ENCODE measurements at regions of chr2 and their contacts with region 1.

Region 1: DNA sequence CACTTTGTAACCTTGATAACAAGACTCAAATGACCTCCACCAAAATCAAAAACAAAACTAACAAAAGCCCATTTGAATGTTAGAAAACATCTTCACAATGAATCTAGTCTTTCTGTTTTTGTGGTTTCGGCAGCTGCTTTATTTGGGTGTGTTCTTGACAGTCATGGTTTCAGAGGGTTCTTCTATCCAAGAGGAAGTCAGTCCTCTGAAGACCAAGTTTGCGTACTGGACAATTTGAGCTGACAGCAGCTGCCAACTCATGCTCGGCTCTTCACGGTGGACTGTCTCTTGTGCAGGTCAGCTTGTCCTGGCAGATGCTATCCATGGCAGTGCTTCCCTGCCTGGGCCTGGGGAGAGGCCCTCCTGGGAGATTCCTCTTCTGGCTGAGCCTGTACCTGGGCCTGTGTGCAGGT is 91.0 kb downstream of the TMEM17 start:
- DNase-seq: no peak
- ATAC-seq: no peak
- H3K4me3 ChIP-seq: no peak overlapping the region
- H3K4me3 Mint-ChIP-seq: no peak overlapping the region
- H3K27ac ChIP-seq: no peak overlapping the region
- H3K27ac Mint-ChIP-seq: no peak overlapping the region
- H3K4me1 ChIP-seq: peaks cover 6% of the 10 kb centered on the region
- H3K4me1 Mint-ChIP-seq: peaks cover 9% of the 10 kb centered on the region
- H3K27me3 ChIP-seq: no peaks in the 10 kb centered on the region
- H3K27me3 Mint-ChIP-seq: peaks cover 2% of the 10 kb centered on the region
- CTCF ChIP-seq: no peak

Region 2: DNA sequence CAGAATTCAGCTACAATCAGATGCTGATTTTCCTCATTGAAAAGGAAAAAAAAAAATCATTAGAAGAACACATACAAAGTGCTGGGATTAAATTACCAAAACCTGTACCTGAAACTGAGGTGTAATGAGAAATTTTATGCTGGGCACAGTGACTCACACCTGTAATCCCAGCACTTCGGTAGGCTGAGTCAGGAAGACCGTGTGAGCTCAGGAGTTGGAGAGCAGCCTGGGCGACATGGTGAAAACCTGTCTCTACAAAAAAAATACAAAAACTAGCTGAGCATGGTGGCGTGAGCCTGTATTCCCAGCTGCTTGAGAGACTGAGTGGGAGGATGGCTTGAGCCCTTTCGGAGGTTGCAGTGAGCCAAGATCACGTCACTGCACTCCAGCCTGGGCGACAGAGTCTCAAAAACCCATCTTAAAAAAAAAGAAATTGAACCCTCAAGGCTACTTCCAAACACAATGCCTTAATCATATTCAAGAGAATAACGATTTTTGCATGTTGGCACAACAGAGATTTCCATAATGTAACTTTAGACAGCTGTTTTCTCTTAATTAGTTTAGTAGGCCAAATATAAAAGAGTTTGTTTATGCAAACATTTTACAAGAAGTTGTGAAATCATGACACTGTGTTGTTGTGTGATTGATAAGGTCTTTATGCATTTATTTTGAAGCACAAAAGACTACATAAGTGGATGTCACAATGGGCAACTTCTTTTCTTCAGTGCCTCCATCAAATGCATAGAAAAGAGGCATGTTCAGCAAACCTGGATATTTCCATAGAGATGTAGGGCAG is 625.0 kb before region 1 on chr2:
- CTCF ChIA-PET with region 1: no interaction called
- POLR2A ChIA-PET with region 1: no interaction called
- intact Hi-C with region 1: loop called in 1 of 2 experiments (anchors 10 kb)
- DNase-seq: no peak
- ATAC-seq: no peak
- H3K4me3 ChIP-seq: no peak overlapping the region
- H3K4me3 Mint-ChIP-seq: no peak overlapping the region
- H3K27ac ChIP-seq: no peak overlapping the region
- H3K27ac Mint-ChIP-seq: no peak overlapping the region
- H3K4me1 ChIP-seq: no peaks in the 10 kb centered on the region
- H3K4me1 Mint-ChIP-seq: peaks cover 5% of the 10 kb centered on the region
- H3K27me3 ChIP-seq: no peaks in the 10 kb centered on the region
- H3K27me3 Mint-ChIP-seq: peaks cover 6% of the 10 kb centered on the region
- CTCF ChIP-seq: no peak

Region 3: GRCh38 chr2:61922714-61923113 is 492.3 kb before region 1 on chr2:
- CTCF ChIA-PET with region 1: interaction called, 21 read pairs
- POLR2A ChIA-PET with region 1: no interaction called
- intact Hi-C with region 1: loop called (anchors 1 kb)
- DNase-seq: no peak
- ATAC-seq: no peak
- H3K4me3 ChIP-seq: no peak overlapping the region
- H3K4me3 Mint-ChIP-seq: no peak overlapping the region
- H3K27ac ChIP-seq: no peak overlapping the region
- H3K27ac Mint-ChIP-seq: no peak overlapping the region
- H3K4me1 ChIP-seq: no peaks in the 10 kb centered on the region
- H3K4me1 Mint-ChIP-seq: no peaks in the 10 kb centered on the region
- H3K27me3 ChIP-seq: no peaks in the 10 kb centered on the region
- H3K27me3 Mint-ChIP-seq: no peaks in the 10 kb centered on the region
- CTCF ChIP-seq: no peak

Region 4: DNA sequence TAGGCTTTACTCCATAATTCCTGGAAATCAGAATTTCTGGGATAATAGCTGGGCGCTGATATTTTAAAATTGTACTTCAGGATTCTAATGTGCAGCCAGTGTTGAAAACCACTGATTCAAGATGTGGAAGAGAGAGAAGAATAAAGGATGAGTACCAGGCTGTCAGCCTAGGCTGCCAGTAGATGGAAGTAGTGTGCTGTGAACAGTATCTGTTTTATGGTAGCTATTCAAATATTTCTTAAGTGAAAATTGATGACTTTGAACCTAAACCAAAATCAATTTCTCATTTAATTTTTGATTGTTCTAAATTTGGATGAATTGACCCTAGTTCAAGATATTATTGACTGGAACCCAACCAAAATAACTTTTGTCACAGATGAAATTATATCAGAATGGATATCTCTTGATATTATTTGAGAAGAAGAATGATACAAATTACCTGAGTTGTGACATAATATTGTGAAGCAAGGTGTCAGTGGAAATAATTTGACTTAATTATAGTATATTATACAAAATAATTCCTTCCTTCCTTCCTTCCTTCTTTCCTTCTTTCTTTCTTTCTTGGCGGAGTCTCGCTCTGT is 421.5 kb before region 1 on chr2:
- CTCF ChIA-PET with region 1: interaction called, 45 read pairs
- POLR2A ChIA-PET with region 1: no interaction called
- intact Hi-C with region 1: loop called in 1 of 2 experiments (anchors 1 kb)
- DNase-seq: peak in 3 of 9 experiments; percentile 13 to 64 (median 48)
- ATAC-seq: no peak
- H3K4me3 ChIP-seq: no peak overlapping the region
- H3K4me3 Mint-ChIP-seq: no peak overlapping the region
- H3K27ac ChIP-seq: no peak overlapping the region
- H3K27ac Mint-ChIP-seq: no peak overlapping the region
- H3K4me1 ChIP-seq: no peaks in the 10 kb centered on the region
- H3K4me1 Mint-ChIP-seq: no peaks in the 10 kb centered on the region
- H3K27me3 ChIP-seq: no peaks in the 10 kb centered on the region
- H3K27me3 Mint-ChIP-seq: no peaks in the 10 kb centered on the region
- CTCF ChIP-seq: peak; percentile 63

Region 5: DNA sequence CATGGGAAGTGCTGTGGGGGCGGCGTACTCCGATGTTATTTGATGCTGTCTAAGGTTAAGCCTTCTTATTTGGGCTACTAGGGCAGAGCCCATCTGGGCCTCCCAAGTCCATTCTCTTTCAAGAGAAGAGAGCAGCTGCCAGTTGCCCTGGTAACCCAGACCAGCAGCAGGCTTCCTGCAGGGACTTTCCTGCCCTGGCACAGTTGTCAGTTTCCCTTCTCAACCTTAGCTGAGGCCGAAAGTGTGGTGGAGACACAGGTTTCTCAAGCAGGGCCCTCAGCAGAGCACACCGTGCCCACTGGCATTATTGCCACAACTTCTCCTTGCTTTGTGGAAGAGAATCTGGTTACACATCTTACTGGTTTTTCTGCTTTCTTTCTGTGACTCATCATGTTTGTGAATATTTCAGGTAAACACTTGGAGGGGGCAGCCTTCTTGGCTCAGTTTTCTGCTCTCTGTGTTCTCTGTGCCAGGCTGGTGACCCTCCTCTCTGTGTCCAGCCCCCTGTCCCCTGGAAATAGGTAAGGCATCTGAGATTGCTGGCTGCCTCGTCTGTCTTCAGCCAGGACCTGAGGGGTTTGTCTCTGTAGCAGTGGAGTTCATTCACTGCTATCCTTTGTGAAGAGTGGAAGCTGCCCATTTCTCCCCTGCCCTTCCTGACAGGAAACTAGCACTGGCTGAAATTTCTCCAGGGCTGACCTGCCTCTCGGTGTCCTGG is 108.1 kb before region 1 on chr2:
- CTCF ChIA-PET with region 1: interaction called, 3 read pairs
- POLR2A ChIA-PET with region 1: no interaction called
- intact Hi-C with region 1: loop called in 1 of 2 experiments (anchors 5 kb)
- DNase-seq: peak in 6 of 9 experiments; percentile 17 to 85 (median 38)
- ATAC-seq: peak; percentile 14
- H3K4me3 ChIP-seq: no peak overlapping the region
- H3K4me3 Mint-ChIP-seq: peak overlapping the region; percentile 13
- H3K27ac ChIP-seq: peak overlapping the region in 1 of 2 experiments; percentile 73
- H3K27ac Mint-ChIP-seq: peak overlapping the region; percentile 82
- H3K4me1 ChIP-seq: peaks cover 89% of the 10 kb centered on the region
- H3K4me1 Mint-ChIP-seq: peaks cover 93% of the 10 kb centered on the region
- H3K27me3 ChIP-seq: no peaks in the 10 kb centered on the region
- H3K27me3 Mint-ChIP-seq: no peaks in the 10 kb centered on the region
- CTCF ChIP-seq: no peak

Region 6: GRCh38 chr2:62402156-62402555 is 12.9 kb before region 1 on chr2:
- CTCF ChIA-PET with region 1: interaction called, 16 read pairs
- POLR2A ChIA-PET with region 1: no interaction called
- intact Hi-C with region 1: no loop called
- DNase-seq: no peak
- ATAC-seq: no peak
- H3K4me3 ChIP-seq: no peak overlapping the region
- H3K4me3 Mint-ChIP-seq: no peak overlapping the region
- H3K27ac ChIP-seq: no peak overlapping the region
- H3K27ac Mint-ChIP-seq: no peak overlapping the region
- H3K4me1 ChIP-seq: no peaks in the 10 kb centered on the region
- H3K4me1 Mint-ChIP-seq: peaks cover 2% of the 10 kb centered on the region
- H3K27me3 ChIP-seq: peaks cover 0 to 2% of the 10 kb centered on the region in 2 experiments
- H3K27me3 Mint-ChIP-seq: no peaks in the 10 kb centered on the region
- CTCF ChIP-seq: no peak

Region 7: GRCh38 chr2:62604336-62604735 is 189.3 kb after region 1 on chr2:
- CTCF ChIA-PET with region 1: no interaction called
- POLR2A ChIA-PET with region 1: no interaction called
- intact Hi-C with region 1: no loop called
- DNase-seq: no peak
- ATAC-seq: no peak
- H3K4me3 ChIP-seq: no peak overlapping the region
- H3K4me3 Mint-ChIP-seq: no peak overlapping the region
- H3K27ac ChIP-seq: no peak overlapping the region
- H3K27ac Mint-ChIP-seq: no peak overlapping the region
- H3K4me1 ChIP-seq: no peaks in the 10 kb centered on the region
- H3K4me1 Mint-ChIP-seq: no peaks in the 10 kb centered on the region
- H3K27me3 ChIP-seq: no peaks in the 10 kb centered on the region
- H3K27me3 Mint-ChIP-seq: peaks cover 14% of the 10 kb centered on the region
- CTCF ChIP-seq: no peak

Measured in CD8-positive, alpha-beta T cell (primary cell).